ENCODE measurements at regions of chr16 and their contacts with region 1.

Region 1: GRCh38 chr16:18801197-18801972 is at the start of gene ARL6IP1:
- DNase-seq: peak; percentile 98 to 100 (median 99)
- H3K4me3 ChIP-seq: peak within 1 kb of the TSS; percentile 50 to 100 (median 94)
- H3K27ac ChIP-seq: peak within 1 kb of the TSS; percentile 74 to 99 (median 94)
- H3K27me3 ChIP-seq: no peaks in the 10 kb centered on the region
- CTCF ChIP-seq: peak; percentile 88 to 100 (median 98)
- total RNA-seq, gene ARL6IP1: 150 to 428 (median 318) TPM

Region 2: DNA sequence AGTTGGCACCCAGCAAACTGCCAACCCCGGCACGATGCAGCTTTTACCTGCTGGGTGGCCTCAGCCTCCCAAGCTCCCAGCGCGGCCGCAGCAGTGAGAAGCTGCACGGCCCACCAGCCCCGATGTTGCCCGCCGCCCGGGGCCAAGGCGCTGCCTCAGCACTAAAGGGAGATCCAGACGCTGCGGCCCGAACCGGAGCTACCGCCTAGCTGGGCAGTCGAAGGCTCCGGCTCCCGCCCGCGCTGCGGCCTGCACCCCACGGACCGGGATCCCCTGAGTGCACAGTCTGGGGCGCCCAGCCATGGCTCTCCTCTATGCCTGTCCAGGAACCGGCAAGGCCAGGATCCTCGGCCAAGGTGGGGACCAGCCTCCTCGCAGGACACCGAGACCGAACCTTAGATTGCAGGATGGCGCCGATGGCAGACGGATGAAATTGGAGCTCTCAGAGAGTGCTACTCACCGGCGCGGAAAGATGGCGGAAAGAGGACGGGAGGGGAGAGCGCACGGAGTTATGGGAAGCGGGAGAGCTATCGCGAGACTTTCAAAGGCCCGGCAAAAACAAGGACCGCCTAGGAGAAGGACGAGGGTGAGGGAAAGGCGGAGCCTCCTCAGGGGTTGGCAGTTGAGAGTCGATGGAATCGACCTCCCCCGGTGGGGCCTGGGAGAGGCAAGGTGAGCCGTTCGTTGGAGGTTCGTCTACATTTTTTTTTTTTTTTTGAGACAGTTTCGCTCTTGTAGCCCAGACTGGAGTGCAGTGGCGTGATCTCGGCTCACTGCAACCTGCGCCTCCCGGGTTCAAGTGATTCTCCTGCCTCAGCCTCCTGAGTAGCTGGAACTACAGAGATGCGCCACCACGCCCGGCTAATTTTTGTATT is 11.3 kb before region 1 on chr16 and contains the start of gene RPS15A:
- intact Hi-C with region 1: loop called (anchors 1 kb)
- DNase-seq: peak; percentile 84 to 95 (median 92)
- H3K4me3 ChIP-seq: peak within 1 kb of the TSS; percentile 63 to 99 (median 94)
- H3K27ac ChIP-seq: peak within 1 kb of the TSS in 57 of 59 donors; percentile 41 to 96 (median 83)
- H3K27me3 ChIP-seq: no peaks in the 10 kb centered on the region
- CTCF ChIP-seq: peak in 33 of 56 donors; percentile 4 to 53 (median 32)
- total RNA-seq, gene RPS15A: 167 to 354 (median 232) TPM

Region 3: DNA sequence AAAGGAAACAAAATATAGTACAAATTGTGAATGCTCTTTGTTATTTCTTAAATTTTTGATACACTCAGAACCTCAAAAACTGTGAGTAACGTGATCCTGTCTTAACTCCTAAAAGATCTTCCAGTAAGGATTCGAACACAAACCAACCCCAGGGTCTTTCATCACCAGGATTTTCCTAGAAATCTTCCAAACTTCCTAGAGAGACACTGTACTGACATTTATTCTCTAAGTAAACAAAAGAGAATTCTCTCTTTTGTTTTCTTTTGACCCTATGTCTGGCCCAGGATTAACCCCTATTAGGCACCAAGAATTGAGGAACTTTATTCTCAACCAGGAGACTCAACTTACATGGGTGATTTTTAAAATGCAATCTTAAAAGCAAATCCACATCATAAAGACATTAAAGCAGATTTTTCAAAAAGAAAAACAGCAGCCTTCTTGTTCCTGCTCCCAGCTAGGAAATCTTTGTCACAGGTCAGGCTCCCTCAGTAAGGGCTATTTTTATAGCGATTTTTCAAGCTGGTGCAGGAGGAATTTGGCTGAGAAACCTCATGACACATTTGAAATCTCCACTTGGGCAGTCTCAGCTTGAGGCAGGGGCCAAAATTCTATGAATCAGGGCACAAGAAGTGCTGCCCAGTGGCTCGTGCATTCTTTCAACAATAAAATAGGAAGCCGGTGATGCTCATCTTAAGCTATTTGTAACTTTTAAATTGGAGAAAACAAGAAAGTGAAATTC is 131.0 kb after region 1 on chr16:
- intact Hi-C with region 1: loop called (anchors 5 kb)
- DNase-seq: peak in 2 of 10 donors; percentile 8 to 77
- H3K4me3 ChIP-seq: no peak overlapping the region
- H3K27ac ChIP-seq: peak overlapping the region in 4 of 59 donors; percentile 10 to 86 (median 36)
- H3K27me3 ChIP-seq: no peaks in the 10 kb centered on the region
- CTCF ChIP-seq: no peak

Region 4: DNA sequence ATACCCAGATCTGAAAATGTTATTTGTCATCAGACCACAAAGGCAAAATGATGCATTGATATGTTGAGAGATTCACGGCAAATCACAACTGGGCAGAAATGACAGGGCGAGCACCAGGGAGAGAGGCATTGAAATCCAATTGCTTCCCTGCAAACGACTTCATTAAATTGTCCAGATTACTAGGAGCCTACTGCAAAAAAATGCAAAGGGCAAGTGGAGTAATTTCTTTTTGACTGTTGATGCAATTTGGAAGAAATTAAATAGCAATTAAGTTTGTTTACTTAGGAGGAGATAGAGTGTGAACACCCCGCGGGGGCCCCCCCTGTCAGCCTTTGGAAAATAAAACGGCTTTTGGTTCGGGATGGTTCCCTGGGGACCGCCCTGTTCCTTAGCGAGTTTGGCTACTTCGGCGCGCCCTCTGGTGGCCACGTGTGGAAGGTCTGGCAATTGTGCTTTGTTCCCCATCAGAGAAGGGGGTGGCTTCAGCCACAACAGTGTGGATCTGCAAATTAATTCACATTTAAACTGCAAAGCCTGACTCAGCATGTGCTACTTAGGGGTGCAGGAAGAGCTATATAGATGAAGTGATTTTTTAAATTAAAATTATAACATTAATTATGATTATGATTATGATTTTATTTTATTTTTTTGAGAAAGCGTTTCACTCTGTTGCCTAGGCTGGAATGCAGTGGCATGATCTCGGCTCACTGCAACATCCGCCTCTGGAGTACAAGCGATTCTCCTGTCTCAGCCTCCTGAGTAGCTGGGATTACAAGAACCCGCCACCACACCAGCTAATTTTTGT is 167.9 kb after region 1 on chr16:
- intact Hi-C with region 1: loop called (anchors 1 to 5 kb)
- DNase-seq: peak; percentile 81 to 95 (median 92)
- H3K4me3 ChIP-seq: peak overlapping the region in 58 of 59 donors; percentile 19 to 70 (median 48)
- H3K27ac ChIP-seq: peak overlapping the region in 29 of 59 donors; percentile 2 to 82 (median 46)
- H3K27me3 ChIP-seq: no peaks in the 10 kb centered on the region
- CTCF ChIP-seq: peak; percentile 89 to 99 (median 97)

Region 5: DNA sequence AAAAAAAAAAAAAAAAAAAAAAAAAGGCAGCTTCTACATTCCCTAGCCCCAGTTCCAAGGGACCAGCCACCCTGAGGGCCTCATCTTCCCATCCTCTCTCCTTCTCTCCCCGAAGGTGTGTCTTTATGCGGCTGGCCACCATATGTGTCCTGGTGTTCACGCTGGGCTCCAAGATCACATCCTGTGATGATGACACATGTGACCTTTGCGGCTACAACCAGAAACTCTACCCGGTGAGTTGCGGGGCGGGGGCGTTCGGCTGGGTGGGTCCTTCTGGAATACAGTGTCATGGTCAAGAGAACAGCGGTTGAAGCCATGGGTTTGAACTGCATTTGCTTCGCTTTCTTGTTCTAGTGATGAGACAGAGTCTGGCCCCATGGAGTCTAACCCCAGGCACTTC is 243.4 kb after region 1 on chr16:
- intact Hi-C with region 1: no loop called
- DNase-seq: no peak
- H3K4me3 ChIP-seq: no peak overlapping the region
- H3K27ac ChIP-seq: no peak overlapping the region
- H3K27me3 ChIP-seq: no peaks in the 10 kb centered on the region
- CTCF ChIP-seq: no peak

Region 6: GRCh38 chr16:19067349-19068236 is 266.2 kb after region 1 on chr16 and contains the start of gene COQ7:
- intact Hi-C with region 1: loop called (anchors 5 kb)
- DNase-seq: peak; percentile 95 to 99 (median 98)
- H3K4me3 ChIP-seq: peak within 1 kb of the TSS; percentile 64 to 98 (median 85)
- H3K27ac ChIP-seq: peak within 1 kb of the TSS; percentile 94 to 100 (median 99)
- H3K27me3 ChIP-seq: no peaks in the 10 kb centered on the region
- CTCF ChIP-seq: peak in 37 of 56 donors; percentile 1 to 67 (median 32)
- total RNA-seq, gene COQ7: 16.8 to 38.7 (median 28.3) TPM